ENCODE measurements at regions of chr4 and their contacts with region 1.

Region 1: DNA sequence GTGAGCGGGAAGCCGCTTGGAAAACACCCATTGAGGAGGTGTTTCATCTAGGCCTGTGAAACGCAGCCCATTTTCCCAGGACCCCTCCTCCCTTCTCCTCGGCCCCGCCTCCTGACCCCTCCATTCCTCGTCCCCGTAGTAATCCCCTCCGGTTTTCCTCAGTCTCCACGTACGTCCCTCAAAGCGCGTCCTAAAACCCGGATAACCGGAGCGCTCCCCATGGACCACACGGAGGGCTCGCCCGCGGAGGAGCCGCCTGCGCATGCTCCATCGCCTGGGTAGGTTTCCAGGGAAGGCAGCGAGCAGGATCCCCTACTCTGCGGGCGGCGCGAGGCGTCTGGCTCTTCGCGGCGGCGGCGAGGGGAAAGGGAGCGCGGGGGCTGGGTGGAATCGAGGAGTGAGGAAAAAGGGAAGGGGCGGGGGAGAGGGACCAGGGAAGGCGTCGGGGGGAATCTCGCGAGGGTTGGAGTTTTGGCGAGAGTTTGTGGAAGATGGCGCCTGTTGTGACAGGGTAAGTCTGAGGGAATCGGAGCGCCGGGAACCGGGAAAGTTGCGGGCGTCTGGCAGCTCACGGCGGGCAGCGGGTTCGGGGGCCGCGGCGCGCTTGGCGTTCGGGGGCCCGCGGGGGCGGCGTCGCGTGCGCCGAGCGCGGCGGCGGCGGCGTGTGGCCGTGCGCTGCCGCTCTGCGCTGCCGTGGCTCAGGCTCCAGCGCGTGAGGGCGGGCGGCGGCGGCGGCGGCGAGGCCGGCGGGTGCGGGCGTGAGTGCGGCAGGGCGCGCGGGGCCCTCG is at the start of gene RBPJ:
- DNase-seq: peak; percentile 93
- ATAC-seq: peak; percentile 84
- total RNA-seq, gene RBPJ: 42.1 TPM

Region 2: DNA sequence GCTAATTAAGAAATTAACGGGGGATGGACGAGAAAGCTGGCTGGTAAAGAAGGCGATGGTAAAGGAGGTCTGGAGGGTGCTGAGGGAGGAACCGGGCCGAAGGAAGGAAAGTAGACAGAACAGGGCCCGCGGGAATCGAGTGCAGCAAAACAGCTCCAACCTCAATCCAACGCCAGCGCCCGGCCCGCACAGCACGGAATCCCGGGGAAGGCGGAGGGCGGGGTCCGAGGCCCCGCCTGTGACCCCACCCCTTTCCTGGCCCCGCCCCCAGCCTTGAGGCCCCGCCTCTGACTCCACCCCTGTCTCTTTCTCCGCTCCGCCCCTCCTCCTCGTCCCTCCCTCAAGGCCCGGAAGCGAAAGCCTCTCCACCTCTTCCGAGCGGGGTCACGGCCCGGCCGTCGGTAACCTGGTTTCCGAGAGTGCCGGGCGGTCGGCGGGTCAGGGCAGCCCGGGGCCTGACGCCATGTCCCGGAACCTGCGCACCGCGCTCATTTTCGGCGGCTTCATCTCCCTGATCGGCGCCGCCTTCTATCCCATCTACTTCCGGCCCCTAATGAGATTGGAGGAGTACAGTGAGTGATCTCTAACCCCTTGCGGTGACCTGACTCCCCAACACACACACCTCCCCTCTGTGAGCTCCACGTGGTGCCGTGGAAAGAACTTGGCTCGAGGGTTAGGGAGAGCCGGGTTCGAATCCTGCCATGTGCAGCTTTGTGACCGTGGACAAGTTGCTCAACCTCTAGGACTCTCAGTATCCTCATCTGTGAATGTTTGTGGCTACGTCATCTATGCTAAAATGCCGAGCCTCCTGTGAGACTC is 406.7 kb before region 1 on chr4 and contains the start of gene SMIM20:
- intact Hi-C with region 1: loop called (anchors 10 kb)
- DNase-seq: peak; percentile 94
- ATAC-seq: peak; percentile 98
- total RNA-seq, gene SMIM20: 41.5 TPM

Region 3: GRCh38 chr4:25986807-25987206 is 333.9 kb before region 1 on chr4:
- intact Hi-C with region 1: loop called (anchors 5 kb)
- DNase-seq: no peak
- ATAC-seq: no peak

Region 4: GRCh38 chr4:26410385-26411293 is 89.9 kb after region 1 on chr4:
- intact Hi-C with region 1: loop called (anchors 5 kb)
- DNase-seq: no peak
- ATAC-seq: no peak

Region 5: DNA sequence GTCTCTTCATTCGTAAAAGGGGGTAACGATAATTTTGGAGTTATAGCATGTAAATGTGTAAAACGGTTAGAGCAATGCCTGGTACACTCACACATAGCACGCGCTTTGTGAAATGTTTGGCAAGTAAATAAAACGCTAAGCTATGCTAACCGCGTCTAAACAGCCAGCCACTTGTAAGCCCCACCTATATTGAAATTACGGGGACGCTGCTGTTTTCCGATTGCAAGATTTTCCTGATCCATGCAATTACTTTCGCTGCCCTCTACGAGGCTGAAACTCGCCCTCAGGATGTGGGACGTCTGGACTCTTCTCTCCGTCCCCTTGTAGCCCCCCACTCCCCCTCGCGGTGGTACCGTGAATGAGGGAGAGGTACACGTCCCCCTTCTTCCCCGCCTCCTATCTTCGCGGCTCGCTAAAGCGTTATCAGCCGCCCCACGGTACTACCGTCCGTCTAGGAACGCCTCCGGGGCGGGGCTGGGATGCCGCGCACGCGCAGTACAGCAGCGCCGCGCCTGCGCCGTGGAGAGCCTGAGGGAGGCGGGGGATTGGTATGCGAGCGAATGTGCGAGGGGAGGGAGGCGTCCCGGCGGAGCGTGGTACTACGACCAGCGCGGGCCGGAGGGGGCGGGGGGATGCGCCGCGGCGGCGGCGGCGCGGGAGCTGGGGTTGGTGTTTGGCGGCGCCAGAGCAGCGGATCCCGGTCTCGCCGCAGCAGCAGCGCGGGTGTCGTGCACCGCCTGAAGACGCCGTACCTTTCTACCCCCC is 539.6 kb after region 1 on chr4 and contains the start of gene STIM2:
- intact Hi-C with region 1: loop called (anchors 10 kb)
- DNase-seq: peak; percentile 98
- ATAC-seq: peak; percentile 94
- total RNA-seq, gene STIM2: 9.2 TPM